ENCODE measurements at regions of chr21 and their contacts with region 1.

Region 1: GRCh38 chr21:46374761-46375389 is 50.9 kb downstream of the PCNT start:
- DNase-seq: no peak
- H3K4me3 ChIP-seq: no peak overlapping the region
- H3K27ac ChIP-seq: no peak overlapping the region
- H3K4me1 ChIP-seq: peaks cover 10% of the 10 kb centered on the region
- H3K27me3 ChIP-seq: no peaks in the 10 kb centered on the region
- CTCF ChIP-seq: no peak

Region 2: GRCh38 chr21:46442938-46443337 is 68.1 kb after region 1 on chr21:
- CTCF ChIA-PET with region 1: no interaction called
- dilution Hi-C with region 1: loop called (anchors 5 kb)
- in situ Hi-C with region 1: no loop called
- intact Hi-C with region 1: no loop called
- DNase-seq: no peak
- H3K4me3 ChIP-seq: no peak overlapping the region
- H3K27ac ChIP-seq: no peak overlapping the region
- H3K4me1 ChIP-seq: no peaks in the 10 kb centered on the region
- H3K27me3 ChIP-seq: no peaks in the 10 kb centered on the region
- CTCF ChIP-seq: no peak

Measured in mammary epithelial cell (primary cell).